Activated T-helper 2 cell treated with anti-CD3 and anti-CD28 coated beads, Interferon-gamma antibody, Interleukin-2, Interleukin-4, amounts not matched to agents 10 μg/mL and 5 μg/mL and 100 μg/mL, durations not matched to agents 14 hours and 24 hours and 36 hours (primary cell): ENCODE measurements at regions of chr2 and their contacts with region 1.

Region 1: DNA sequence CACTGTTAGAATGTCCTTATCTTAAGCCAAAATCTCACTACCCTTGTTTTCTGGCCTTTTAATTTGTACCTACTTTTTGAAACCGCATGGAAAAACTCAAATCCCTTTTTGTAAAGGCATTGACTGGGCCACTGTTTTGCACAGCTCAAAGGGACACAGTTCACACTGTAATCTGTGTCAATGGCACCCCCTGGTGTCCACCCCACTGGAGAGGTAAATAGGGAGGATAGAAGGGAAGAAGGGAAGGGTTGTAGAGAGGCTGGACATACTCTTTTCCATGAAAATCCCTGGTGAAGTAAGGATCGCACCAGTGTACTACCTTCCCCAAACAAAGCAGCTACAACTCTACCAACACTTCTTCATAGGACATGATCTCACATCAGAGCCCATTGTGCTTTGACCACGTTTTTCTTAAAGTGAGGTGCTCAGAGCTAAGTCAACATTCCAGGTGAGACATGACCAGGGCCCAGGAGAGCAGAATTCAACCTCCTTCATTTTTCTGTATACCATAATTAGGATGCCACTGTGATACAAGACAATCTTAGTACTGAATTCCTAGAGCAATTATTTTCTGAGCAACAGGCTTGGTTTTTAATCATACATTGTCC is 92.4 kb upstream of the RMDN2 start:
- DNase-seq: peak; percentile 55
- H3K4me3 Mint-ChIP-seq: no peak overlapping the region
- H3K27ac Mint-ChIP-seq: no peak overlapping the region
- H3K4me1 Mint-ChIP-seq: peaks cover 21% of the 10 kb centered on the region
- H3K27me3 Mint-ChIP-seq: peaks cover 1% of the 10 kb centered on the region

Region 2: GRCh38 chr2:37414470-37414949 is 418.2 kb before region 1 on chr2:
- intact Hi-C with region 1: loop called (anchors 1 kb)
- DNase-seq: no peak
- H3K4me3 Mint-ChIP-seq: no peak overlapping the region
- H3K27ac Mint-ChIP-seq: no peak overlapping the region
- H3K4me1 Mint-ChIP-seq: no peaks in the 10 kb centered on the region
- H3K27me3 Mint-ChIP-seq: peaks cover 22% of the 10 kb centered on the region

Region 3: GRCh38 chr2:37549598-37549997 is 283.1 kb before region 1 on chr2:
- intact Hi-C with region 1: loop called (anchors 1 kb)
- DNase-seq: no peak
- H3K4me3 Mint-ChIP-seq: no peak overlapping the region
- H3K27ac Mint-ChIP-seq: no peak overlapping the region
- H3K4me1 Mint-ChIP-seq: peaks cover 12% of the 10 kb centered on the region
- H3K27me3 Mint-ChIP-seq: peaks cover 11% of the 10 kb centered on the region

Region 4: GRCh38 chr2:37786854-37787253 is 45.8 kb before region 1 on chr2:
- intact Hi-C with region 1: no loop called
- DNase-seq: no peak
- H3K4me3 Mint-ChIP-seq: no peak overlapping the region
- H3K27ac Mint-ChIP-seq: no peak overlapping the region
- H3K4me1 Mint-ChIP-seq: no peaks in the 10 kb centered on the region
- H3K27me3 Mint-ChIP-seq: no peaks in the 10 kb centered on the region